Gastrocnemius medialis (tissue), 4 donors: ENCODE measurements at regions of chr2 and their contacts with region 1.

Region 1: DNA sequence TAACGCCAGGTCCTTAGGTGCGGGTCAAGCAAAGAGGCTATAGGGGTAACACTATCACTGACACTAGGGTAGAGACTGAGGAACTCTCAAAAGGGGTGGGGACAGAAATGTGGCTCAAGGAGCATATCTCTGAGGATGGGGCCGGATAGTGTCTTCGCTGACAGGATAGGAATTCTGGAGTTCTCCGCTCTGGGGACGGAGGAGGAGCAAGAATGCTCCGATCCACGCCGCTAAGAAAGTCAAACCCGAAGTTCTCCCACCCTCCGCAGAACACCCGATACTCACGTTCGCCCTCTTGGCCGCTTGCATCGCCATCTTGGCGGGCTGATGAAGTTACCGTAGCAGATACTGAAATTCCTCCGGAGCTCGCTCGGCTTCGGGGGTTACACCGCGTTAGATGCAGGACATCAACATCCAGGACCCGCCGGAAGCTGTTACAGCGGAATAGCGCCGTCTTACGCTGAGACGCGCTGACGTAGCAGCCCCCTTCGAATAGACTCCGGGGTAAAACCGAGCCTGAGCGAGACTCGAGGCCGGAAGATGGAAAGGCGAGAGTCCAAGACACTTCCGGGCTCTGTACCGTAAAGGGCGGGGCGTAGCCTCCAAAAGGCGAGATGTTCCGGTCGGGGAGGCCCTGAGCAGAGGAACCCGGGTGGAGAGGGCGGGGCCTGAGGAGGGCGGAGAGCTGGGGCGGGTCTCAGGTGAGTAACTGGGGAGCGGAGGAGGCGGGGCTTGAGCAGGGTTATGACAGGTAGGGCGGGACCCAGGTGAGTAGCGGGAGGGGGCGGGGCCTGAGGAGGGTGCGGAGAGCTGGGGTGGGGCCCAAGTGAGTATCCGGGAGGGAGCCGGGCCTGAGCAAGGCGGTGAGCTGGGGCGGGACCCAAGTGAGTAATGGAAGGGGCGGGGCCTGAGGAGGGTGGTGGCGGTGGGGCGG is at the start of gene SF3B6:
- DNase-seq: peak; percentile 96 to 98
- ATAC-seq: peak; percentile 96 to 97
- H3K4me3 ChIP-seq: peak within 1 kb of the TSS; percentile 80 to 92 (median 84)
- H3K27ac ChIP-seq: peak within 1 kb of the TSS; percentile 84 to 90 (median 87)
- H3K4me1 ChIP-seq: peaks cover 21 to 22% of the 10 kb centered on the region in 2 donors
- H3K27me3 ChIP-seq: no peaks in the 10 kb centered on the region
- CTCF ChIP-seq: no peak
- POLR2A ChIP-seq: peak; percentile 51 to 58
- total RNA-seq, gene SF3B6: 55.2 to 88.1 (median 70.5) TPM

Region 2: DNA sequence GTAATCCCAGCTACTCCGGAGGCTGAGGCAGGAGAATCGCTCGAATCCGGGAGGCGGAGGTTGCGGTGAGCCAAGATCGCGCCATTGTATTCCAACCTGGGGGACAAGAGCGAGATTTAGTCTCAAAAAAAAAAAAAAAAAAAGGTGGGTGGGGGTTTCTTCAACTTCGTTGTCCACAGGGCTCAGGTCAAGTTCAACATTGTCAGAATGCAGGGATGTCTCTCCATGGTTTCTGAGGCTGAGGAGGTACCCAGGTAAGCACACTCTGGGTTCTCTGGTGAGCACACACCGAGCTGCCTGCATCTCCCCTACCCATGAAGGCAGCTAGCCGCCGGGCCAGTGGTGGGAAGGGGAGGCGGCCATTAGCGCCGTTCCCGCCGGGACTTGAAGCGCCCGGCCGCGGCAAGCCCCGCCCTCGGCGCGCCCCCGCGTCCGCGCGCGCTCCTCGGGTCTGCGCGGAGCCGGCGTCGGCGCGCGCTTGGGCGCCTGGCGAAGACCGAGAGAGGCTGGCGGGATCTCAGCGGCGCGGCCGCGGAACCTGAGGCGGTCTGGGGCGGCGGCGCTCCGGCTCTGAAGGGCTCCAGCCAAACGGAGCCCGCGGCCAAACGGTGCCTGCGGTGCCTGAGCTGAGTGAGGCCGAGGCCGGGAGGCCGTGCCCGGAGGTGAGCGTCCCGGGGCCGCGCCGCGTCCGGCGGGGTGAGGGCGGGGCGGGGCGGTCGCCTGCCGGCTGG is 136.0 kb before region 1 on chr2 and contains the start of gene UBXN2A:
- in situ Hi-C with region 1: loop called in 1 of 4 experiments (anchors 10 kb)
- intact Hi-C with region 1: loop called (anchors 1 kb)
- DNase-seq: peak; percentile 35 to 70
- ATAC-seq: peak; percentile 87 to 90
- H3K4me3 ChIP-seq: peak within 1 kb of the TSS; percentile 58 to 84 (median 77)
- H3K27ac ChIP-seq: peak within 1 kb of the TSS; percentile 88 to 96 (median 94)
- H3K4me1 ChIP-seq: peaks cover 29 to 30% of the 10 kb centered on the region in 2 donors
- H3K27me3 ChIP-seq: no peaks in the 10 kb centered on the region
- CTCF ChIP-seq: peak in 1 of 5 experiments; percentile 3
- POLR2A ChIP-seq: peak; percentile 85 to 88
- total RNA-seq, gene UBXN2A: 13.7 to 20.8 (median 17.0) TPM

Region 3: GRCh38 chr2:24046930-24047702 is 29.1 kb before region 1 on chr2 and contains the start of gene WDCP:
- in situ Hi-C with region 1: no loop called
- intact Hi-C with region 1: loop called (anchors 1 kb)
- DNase-seq: peak; percentile 97
- ATAC-seq: peak; percentile 100
- H3K4me3 ChIP-seq: peak within 1 kb of the TSS; percentile 68 to 98 (median 90)
- H3K27ac ChIP-seq: peak within 1 kb of the TSS; percentile 79 to 85 (median 82)
- H3K4me1 ChIP-seq: peaks cover 19 to 27% of the 10 kb centered on the region in 2 donors
- H3K27me3 ChIP-seq: peaks cover 8 to 21% (median 18%) of the 10 kb centered on the region in 3 donors
- CTCF ChIP-seq: no peak
- POLR2A ChIP-seq: peak; percentile 47 to 80
- total RNA-seq, gene WDCP: 4.8 to 8.4 (median 8.3) TPM

Region 4: GRCh38 chr2:24104054-24104650 is 28.0 kb after region 1 on chr2:
- in situ Hi-C with region 1: no loop called
- intact Hi-C with region 1: no loop called
- DNase-seq: no peak
- ATAC-seq: no peak
- H3K4me3 ChIP-seq: no peak overlapping the region
- H3K27ac ChIP-seq: no peak overlapping the region
- H3K4me1 ChIP-seq: no peaks in the 10 kb centered on the region
- H3K27me3 ChIP-seq: no peaks in the 10 kb centered on the region
- CTCF ChIP-seq: no peak
- POLR2A ChIP-seq: no peak

Region 5: GRCh38 chr2:24123195-24123921 is 47.2 kb after region 1 on chr2 and contains the starts of genes FAM228B and PFN4:
- in situ Hi-C with region 1: no loop called
- intact Hi-C with region 1: loop called (anchors 2 kb)
- DNase-seq: peak; percentile 85 to 88
- ATAC-seq: peak; percentile 93
- H3K4me3 ChIP-seq: peak within 1 kb of the TSS; percentile 80 to 94 (median 84)
- H3K27ac ChIP-seq: peak within 1 kb of the TSS; percentile 86 to 93 (median 91)
- H3K4me1 ChIP-seq: peaks cover 11 to 17% of the 10 kb centered on the region in 2 donors
- H3K27me3 ChIP-seq: no peaks in the 10 kb centered on the region
- CTCF ChIP-seq: no peak
- POLR2A ChIP-seq: peak; percentile 84 to 88
- total RNA-seq, gene FAM228B: 3.0 to 6.7 (median 4.3) TPM
- total RNA-seq, gene PFN4: not detected